ENCODE measurements at regions of chr3 and their contacts with region 1.

Region 1: DNA sequence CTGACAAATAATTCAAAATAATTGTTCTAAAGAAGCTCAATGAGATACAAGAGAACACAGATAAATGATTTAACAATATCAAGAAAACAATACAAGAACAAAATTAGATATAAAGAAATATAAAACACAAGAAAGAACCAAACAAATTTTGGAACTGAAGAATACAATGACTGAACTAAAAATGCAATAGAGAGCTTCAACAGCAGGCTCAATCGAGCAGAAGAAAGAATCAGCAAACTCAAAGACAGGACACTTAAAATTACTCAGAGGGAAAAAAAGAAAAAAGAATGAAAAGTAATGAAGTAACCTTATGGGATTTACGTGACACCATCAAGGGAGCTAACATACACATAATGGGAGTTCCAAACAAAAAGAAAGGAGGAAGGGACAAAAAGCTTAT is 32.1 kb downstream of the CCDC54 start:
- H3K4me3 ChIP-seq: no peak overlapping the region
- H3K27ac ChIP-seq: no peak overlapping the region
- H3K4me1 ChIP-seq: no peaks in the 10 kb centered on the region
- CTCF ChIP-seq: no peak

Region 2: DNA sequence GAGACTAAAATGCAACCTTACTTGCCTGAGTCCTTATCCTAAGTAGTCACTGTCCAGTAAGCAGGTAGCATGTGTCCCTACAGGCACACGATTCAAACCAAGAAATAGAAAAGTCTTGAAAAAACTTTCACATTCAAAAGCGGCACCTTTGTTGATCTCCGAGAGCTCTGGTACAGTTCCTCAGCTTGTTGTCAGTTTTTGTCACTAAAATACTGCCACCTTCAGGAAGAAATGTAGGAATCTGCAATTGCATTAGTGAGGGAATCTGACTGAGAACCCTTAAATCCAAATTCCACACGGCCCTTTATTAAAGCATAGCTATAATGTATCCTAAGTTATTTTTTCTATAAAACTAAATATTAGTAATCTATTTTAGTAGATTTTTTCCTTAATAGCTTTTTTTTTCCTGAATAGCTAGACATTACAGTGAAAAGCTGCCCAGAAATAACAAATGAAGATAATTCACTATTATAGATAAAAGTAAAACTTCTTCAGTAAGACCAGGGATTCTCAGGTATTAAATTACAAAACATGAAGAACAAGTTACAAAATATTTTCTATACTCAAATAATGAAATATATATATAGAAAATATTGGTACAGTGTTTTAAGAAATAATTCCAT is 11.9 kb after region 1 on chr3:
- CTCF ChIA-PET with region 1: interaction called, 12 read pairs
- POLR2A ChIA-PET with region 1: no interaction called
- H3K4me3 ChIP-seq: no peak overlapping the region; the same call in none of the 2 replicates
- H3K27ac ChIP-seq: no peak overlapping the region
- H3K4me1 ChIP-seq: no peaks in the 10 kb centered on the region
- CTCF ChIP-seq: no peak